CD4-positive, alpha-beta memory T cell (primary cell): ENCODE measurements at regions of chr17 and their contacts with region 1.

Region 1: GRCh38 chr17:43673516-43674323 is 12.0 kb upstream of the MEOX1 start:
- DNase-seq: peak; percentile 57 to 67 (median 62)
- H3K4me3 ChIP-seq: no peak overlapping the region
- H3K4me3 Mint-ChIP-seq: no peak overlapping the region
- H3K27ac ChIP-seq: no peak overlapping the region
- H3K27ac Mint-ChIP-seq: peak overlapping the region in 3 of 7 donors; percentile 6 to 68 (median 67)
- H3K4me1 ChIP-seq: peaks cover 13% of the 10 kb centered on the region
- H3K4me1 Mint-ChIP-seq: peaks cover 4 to 19% (median 12%) of the 10 kb centered on the region in 4 donors
- H3K27me3 ChIP-seq: no peaks in the 10 kb centered on the region
- H3K27me3 Mint-ChIP-seq: peaks cover 0 to 4% of the 10 kb centered on the region in 2 donors

Region 2: GRCh38 chr17:43456661-43457361 is 216.9 kb before region 1 on chr17:
- CTCF ChIA-PET with region 1: no interaction called
- POLR2A ChIA-PET with region 1: no interaction called
- intact Hi-C with region 1: no loop called
- DNase-seq: no peak
- H3K4me3 ChIP-seq: no peak overlapping the region
- H3K4me3 Mint-ChIP-seq: no peak overlapping the region
- H3K27ac ChIP-seq: no peak overlapping the region
- H3K27ac Mint-ChIP-seq: peak overlapping the region in 2 of 7 donors; percentile 74 to 80
- H3K4me1 ChIP-seq: no peaks in the 10 kb centered on the region
- H3K4me1 Mint-ChIP-seq: peaks cover 0 to 6% (median 3%) of the 10 kb centered on the region in 4 donors
- H3K27me3 ChIP-seq: no peaks in the 10 kb centered on the region
- H3K27me3 Mint-ChIP-seq: peaks cover 0 to 15% of the 10 kb centered on the region in 2 donors

Region 3: DNA sequence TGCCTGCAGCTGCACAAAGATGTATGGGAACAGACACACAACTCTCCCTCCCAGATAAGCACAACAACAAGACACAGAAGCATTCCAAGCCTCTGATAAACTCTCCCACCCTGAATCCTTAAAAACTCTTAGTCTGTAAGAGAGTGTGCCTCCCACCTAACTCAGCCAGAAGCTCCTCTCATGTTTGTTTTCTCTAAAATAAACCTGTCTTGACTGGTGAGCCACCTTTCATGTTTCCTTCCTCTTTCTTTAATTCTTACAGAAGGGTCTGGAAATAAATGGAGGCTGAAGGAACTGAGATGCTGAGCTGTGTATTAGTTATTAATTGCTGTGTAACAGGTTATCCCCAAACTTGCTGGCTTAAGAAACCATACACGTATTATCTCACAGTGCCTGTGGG is 69.2 kb before region 1 on chr17:
- CTCF ChIA-PET with region 1: interaction called, 10 read pairs
- POLR2A ChIA-PET with region 1: no interaction called
- intact Hi-C with region 1: no loop called
- DNase-seq: no peak
- H3K4me3 ChIP-seq: no peak overlapping the region
- H3K4me3 Mint-ChIP-seq: no peak overlapping the region
- H3K27ac ChIP-seq: no peak overlapping the region
- H3K27ac Mint-ChIP-seq: no peak overlapping the region
- H3K4me1 ChIP-seq: no peaks in the 10 kb centered on the region
- H3K4me1 Mint-ChIP-seq: peaks cover 0 to 2% (median under 1%) of the 10 kb centered on the region in 4 donors
- H3K27me3 ChIP-seq: no peaks in the 10 kb centered on the region
- H3K27me3 Mint-ChIP-seq: no peaks in the 10 kb centered on the region

Region 4: GRCh38 chr17:43645765-43646481 is 27.8 kb before region 1 on chr17:
- CTCF ChIA-PET with region 1: interaction called, 12 read pairs
- POLR2A ChIA-PET with region 1: no interaction called
- intact Hi-C with region 1: no loop called
- DNase-seq: no peak
- H3K4me3 ChIP-seq: no peak overlapping the region
- H3K4me3 Mint-ChIP-seq: peak overlapping the region in 6 of 8 donors; percentile 44 to 76 (median 66)
- H3K27ac ChIP-seq: no peak overlapping the region
- H3K27ac Mint-ChIP-seq: peak overlapping the region in 1 of 7 donors; percentile 23
- H3K4me1 ChIP-seq: peaks cover 14% of the 10 kb centered on the region
- H3K4me1 Mint-ChIP-seq: peaks cover 3 to 27% (median 19%) of the 10 kb centered on the region in 4 donors
- H3K27me3 ChIP-seq: no peaks in the 10 kb centered on the region
- H3K27me3 Mint-ChIP-seq: peaks cover 2 to 9% of the 10 kb centered on the region in 2 donors

Region 5: GRCh38 chr17:43661699-43662412 is 11.9 kb before region 1 on chr17 and contains the start of gene MEOX1:
- CTCF ChIA-PET with region 1: interaction called, 12 read pairs
- POLR2A ChIA-PET with region 1: interaction called, 3 read pairs
- intact Hi-C with region 1: no loop called
- DNase-seq: no peak
- H3K4me3 ChIP-seq: peak within 1 kb of the TSS in 1 of 2 donors; percentile 40
- H3K4me3 Mint-ChIP-seq: peak within 1 kb of the TSS; percentile 33 to 87 (median 69)
- H3K27ac ChIP-seq: peak within 1 kb of the TSS; percentile 20
- H3K27ac Mint-ChIP-seq: peak within 1 kb of the TSS; percentile 55 to 85 (median 73)
- H3K4me1 ChIP-seq: peaks cover 62% of the 10 kb centered on the region
- H3K4me1 Mint-ChIP-seq: peaks cover 16 to 55% (median 47%) of the 10 kb centered on the region in 4 donors
- H3K27me3 ChIP-seq: no peaks in the 10 kb centered on the region
- H3K27me3 Mint-ChIP-seq: no peaks in the 10 kb centered on the region
- total RNA-seq, gene MEOX1: 1.7 to 2.1 TPM

Region 6: GRCh38 chr17:43760254-43760852 is 86.6 kb after region 1 on chr17:
- CTCF ChIA-PET with region 1: no interaction called
- POLR2A ChIA-PET with region 1: no interaction called
- intact Hi-C with region 1: no loop called
- DNase-seq: peak; percentile 79 to 85 (median 83)
- H3K4me3 ChIP-seq: no peak overlapping the region
- H3K4me3 Mint-ChIP-seq: no peak overlapping the region
- H3K27ac ChIP-seq: no peak overlapping the region
- H3K27ac Mint-ChIP-seq: no peak overlapping the region
- H3K4me1 ChIP-seq: no peaks in the 10 kb centered on the region
- H3K4me1 Mint-ChIP-seq: peaks cover 0 to 6% (median 4%) of the 10 kb centered on the region in 4 donors
- H3K27me3 ChIP-seq: no peaks in the 10 kb centered on the region
- H3K27me3 Mint-ChIP-seq: peaks cover 18 to 19% of the 10 kb centered on the region in 2 donors

Region 7: GRCh38 chr17:43917348-43918018 is 243.8 kb after region 1 on chr17:
- CTCF ChIA-PET with region 1: no interaction called
- POLR2A ChIA-PET with region 1: no interaction called
- intact Hi-C with region 1: no loop called
- DNase-seq: peak; percentile 30 to 76 (median 53)
- H3K4me3 ChIP-seq: peak overlapping the region; percentile 19 to 63
- H3K4me3 Mint-ChIP-seq: peak overlapping the region; percentile 79 to 90 (median 86)
- H3K27ac ChIP-seq: peak overlapping the region; percentile 24
- H3K27ac Mint-ChIP-seq: peak overlapping the region; percentile 15 to 92 (median 63)
- H3K4me1 ChIP-seq: peaks cover 17% of the 10 kb centered on the region
- H3K4me1 Mint-ChIP-seq: peaks cover 11 to 17% (median 14%) of the 10 kb centered on the region in 4 donors
- H3K27me3 ChIP-seq: no peaks in the 10 kb centered on the region
- H3K27me3 Mint-ChIP-seq: no peaks in the 10 kb centered on the region

Region 8: DNA sequence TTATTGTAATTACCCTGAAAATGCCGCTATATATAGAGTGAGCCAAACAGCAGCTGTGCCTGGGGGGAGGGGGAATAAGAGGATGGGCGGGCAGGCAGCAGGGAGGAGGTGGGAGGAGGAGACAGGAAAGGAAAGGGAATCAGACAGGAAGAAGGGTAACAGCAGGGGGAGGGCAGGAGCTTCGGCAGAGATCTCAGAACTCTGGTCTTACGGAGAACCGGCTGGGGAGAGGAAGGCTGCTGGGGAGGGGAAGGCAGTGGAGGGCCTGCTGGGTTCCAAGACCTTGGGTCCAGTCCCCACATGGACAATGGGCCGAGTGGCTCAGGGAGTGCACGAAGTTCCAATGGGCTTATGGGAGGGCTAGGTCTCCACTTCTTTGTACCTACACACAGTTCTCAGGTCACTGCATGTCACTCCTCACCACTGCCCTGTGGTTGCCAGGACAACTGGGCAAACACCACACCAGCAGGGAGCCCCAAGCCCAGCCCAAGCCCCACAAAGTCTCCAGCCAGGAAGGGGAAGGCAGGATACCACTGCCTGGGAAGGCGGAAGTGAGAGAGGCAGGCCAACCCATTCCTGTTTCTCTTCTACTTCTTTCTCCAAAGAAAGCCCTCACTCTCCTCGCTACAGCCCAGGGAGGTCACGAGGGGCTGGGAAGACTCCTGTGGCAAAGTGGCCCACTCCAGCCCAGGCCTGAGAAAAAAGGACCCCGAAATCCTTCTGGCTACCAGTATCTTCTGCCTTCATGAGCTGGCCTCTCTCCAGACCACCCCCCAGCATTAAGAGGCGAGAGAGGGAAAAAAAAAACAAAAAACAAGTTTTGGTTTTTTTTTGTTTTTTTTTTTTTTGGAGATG is 422.1 kb after region 1 on chr17:
- CTCF ChIA-PET with region 1: no interaction called
- POLR2A ChIA-PET with region 1: no interaction called
- intact Hi-C with region 1: no loop called
- DNase-seq: peak in 1 of 5 donors; percentile 20
- H3K4me3 ChIP-seq: no peak overlapping the region
- H3K4me3 Mint-ChIP-seq: no peak overlapping the region
- H3K27ac ChIP-seq: no peak overlapping the region
- H3K27ac Mint-ChIP-seq: peak overlapping the region in 2 of 7 donors; percentile 37 to 46
- H3K4me1 ChIP-seq: peaks cover 7% of the 10 kb centered on the region
- H3K4me1 Mint-ChIP-seq: peaks cover 0 to 16% (median 3%) of the 10 kb centered on the region in 4 donors
- H3K27me3 ChIP-seq: no peaks in the 10 kb centered on the region
- H3K27me3 Mint-ChIP-seq: no peaks in the 10 kb centered on the region